HCT116 (cell line): ENCODE measurements at regions of chr4 and their contacts with region 1.

Region 1: DNA sequence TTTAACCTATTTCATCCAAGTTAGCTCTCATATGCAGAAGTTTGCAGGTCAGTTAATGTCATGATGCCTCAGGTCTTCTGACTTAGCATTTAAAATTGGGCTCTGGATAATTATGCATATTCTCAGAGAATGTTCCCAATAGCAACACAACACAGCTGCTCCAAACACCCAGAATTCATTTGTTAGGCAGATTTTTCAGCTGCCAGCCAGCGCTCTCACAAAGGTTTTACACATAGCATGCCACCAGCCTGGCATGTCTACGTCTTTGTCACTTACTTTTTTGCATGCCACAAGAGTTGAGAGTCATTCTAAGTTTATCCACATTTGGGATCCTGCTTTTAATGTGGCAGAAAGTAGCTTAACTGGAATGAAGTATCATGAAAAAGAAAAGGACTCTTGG is 84.8 kb downstream of the LIMCH1 start:
- DNase-seq: no peak
- ATAC-seq: no peak
- H3K4me3 ChIP-seq: no peak overlapping the region
- H3K27ac ChIP-seq: no peak overlapping the region
- H3K4me1 ChIP-seq: no peaks in the 10 kb centered on the region
- H3K27me3 ChIP-seq: no peaks in the 10 kb centered on the region
- CTCF ChIP-seq: no peak
- POLR2A ChIP-seq: no peak
- RAD21 ChIP-seq: no peak

Region 2: GRCh38 chr4:40587823-40588222 is 1035.0 kb before region 1 on chr4:
- CTCF ChIA-PET with region 1: no interaction called
- POLR2A ChIA-PET with region 1: no interaction called
- RAD21 ChIA-PET with region 1: no interaction called
- intact Hi-C with region 1: no loop called
- DNase-seq: no peak
- ATAC-seq: no peak
- H3K4me3 ChIP-seq: no peak overlapping the region
- H3K27ac ChIP-seq: no peak overlapping the region
- H3K4me1 ChIP-seq: no peaks in the 10 kb centered on the region
- H3K27me3 ChIP-seq: no peaks in the 10 kb centered on the region
- CTCF ChIP-seq: no peak
- POLR2A ChIP-seq: no peak
- RAD21 ChIP-seq: no peak

Region 3: GRCh38 chr4:41586675-41587225 is 36.0 kb before region 1 on chr4:
- CTCF ChIA-PET with region 1: no interaction called
- POLR2A ChIA-PET with region 1: no interaction called
- RAD21 ChIA-PET with region 1: no interaction called
- intact Hi-C with region 1: loop called (anchors 1 kb)
- DNase-seq: no peak
- ATAC-seq: no peak
- H3K4me3 ChIP-seq: no peak overlapping the region
- H3K27ac ChIP-seq: no peak overlapping the region
- H3K4me1 ChIP-seq: no peaks in the 10 kb centered on the region
- H3K27me3 ChIP-seq: no peaks in the 10 kb centered on the region
- CTCF ChIP-seq: no peak
- POLR2A ChIP-seq: no peak
- RAD21 ChIP-seq: no peak